ENCODE measurements at regions of chr6 and their contacts with region 1.

Region 1: DNA sequence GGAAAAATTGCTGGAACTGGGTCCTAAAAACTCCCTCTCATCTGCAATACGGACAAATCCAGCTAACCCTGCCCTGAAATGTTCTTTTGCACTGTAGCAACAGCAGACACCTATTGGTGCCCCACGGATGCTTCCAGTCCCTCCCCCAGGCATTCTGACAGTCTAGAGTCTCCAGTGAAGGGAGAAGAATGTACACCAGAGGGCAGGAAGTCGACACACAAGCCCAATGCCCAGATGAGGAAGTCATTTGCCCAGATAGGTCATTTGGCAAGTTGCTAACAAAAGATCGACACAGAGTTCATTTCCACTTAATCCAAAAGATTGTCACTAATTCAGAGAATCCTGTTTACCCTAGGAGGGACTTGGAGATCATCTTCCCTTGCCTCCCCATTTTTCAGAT is 293.0 kb upstream of the PRDM1 start:
- DNase-seq: peak; percentile 72
- H3K4me3 Mint-ChIP-seq: peak overlapping the region; percentile 54
- H3K27ac Mint-ChIP-seq: peak overlapping the region; percentile 76
- H3K4me1 Mint-ChIP-seq: peaks cover 74% of the 10 kb centered on the region
- H3K27me3 Mint-ChIP-seq: no peaks in the 10 kb centered on the region

Region 2: GRCh38 chr6:105484238-105485161 is 308.6 kb before region 1 on chr6:
- intact Hi-C with region 1: loop called (anchors 5 kb)
- DNase-seq: peak; percentile 63
- H3K4me3 Mint-ChIP-seq: no peak overlapping the region
- H3K27ac Mint-ChIP-seq: peak overlapping the region; percentile 26
- H3K4me1 Mint-ChIP-seq: peaks cover 41% of the 10 kb centered on the region
- H3K27me3 Mint-ChIP-seq: peaks cover 6% of the 10 kb centered on the region

Region 3: DNA sequence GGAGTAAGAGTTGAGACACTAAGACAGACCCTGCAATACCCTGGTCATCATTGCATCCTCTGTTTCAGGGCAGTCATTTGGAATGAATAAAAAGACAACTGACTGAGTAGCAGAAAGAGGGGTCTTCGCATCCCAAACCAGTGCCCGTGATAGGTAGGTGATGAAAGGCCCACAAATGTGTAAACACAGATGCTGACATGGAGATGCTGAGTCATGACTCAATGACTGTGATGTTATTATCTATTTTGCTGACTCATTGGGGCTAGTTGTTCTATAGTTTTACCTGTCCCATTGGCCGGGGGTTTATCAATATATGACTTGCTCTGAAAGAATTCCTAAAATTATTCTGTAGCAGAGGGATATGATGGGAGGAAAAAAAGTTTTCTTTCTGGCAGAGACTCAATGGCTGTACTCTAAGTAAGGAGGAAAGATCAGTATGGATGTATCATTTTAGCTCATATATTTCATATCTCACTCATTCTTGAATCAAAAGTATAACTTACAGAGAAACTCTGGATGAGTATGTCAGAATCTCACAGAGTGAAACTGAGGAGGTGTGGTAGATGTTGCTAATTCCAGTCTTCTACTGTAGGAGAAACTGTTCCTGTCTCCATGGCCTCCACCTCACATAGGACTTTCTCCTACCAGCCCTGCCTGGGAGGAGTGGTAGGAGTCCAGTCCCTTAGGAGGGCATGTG is 270.4 kb before region 1 on chr6:
- intact Hi-C with region 1: no loop called
- DNase-seq: no peak
- H3K4me3 Mint-ChIP-seq: no peak overlapping the region
- H3K27ac Mint-ChIP-seq: peak overlapping the region; percentile 5
- H3K4me1 Mint-ChIP-seq: no peaks in the 10 kb centered on the region
- H3K27me3 Mint-ChIP-seq: peaks cover 15% of the 10 kb centered on the region

Region 4: GRCh38 chr6:105748737-105749161 is 44.4 kb before region 1 on chr6:
- intact Hi-C with region 1: loop called (anchors 5 kb)
- DNase-seq: no peak
- H3K4me3 Mint-ChIP-seq: no peak overlapping the region
- H3K27ac Mint-ChIP-seq: peak overlapping the region; percentile 39
- H3K4me1 Mint-ChIP-seq: peaks cover 44% of the 10 kb centered on the region
- H3K27me3 Mint-ChIP-seq: peaks cover 3% of the 10 kb centered on the region

Region 5: GRCh38 chr6:105757512-105758200 is 35.5 kb before region 1 on chr6:
- intact Hi-C with region 1: loop called (anchors 5 kb)
- DNase-seq: peak; percentile 75
- H3K4me3 Mint-ChIP-seq: peak overlapping the region; percentile 46
- H3K27ac Mint-ChIP-seq: peak overlapping the region; percentile 89
- H3K4me1 Mint-ChIP-seq: peaks cover 46% of the 10 kb centered on the region
- H3K27me3 Mint-ChIP-seq: no peaks in the 10 kb centered on the region

Region 6: DNA sequence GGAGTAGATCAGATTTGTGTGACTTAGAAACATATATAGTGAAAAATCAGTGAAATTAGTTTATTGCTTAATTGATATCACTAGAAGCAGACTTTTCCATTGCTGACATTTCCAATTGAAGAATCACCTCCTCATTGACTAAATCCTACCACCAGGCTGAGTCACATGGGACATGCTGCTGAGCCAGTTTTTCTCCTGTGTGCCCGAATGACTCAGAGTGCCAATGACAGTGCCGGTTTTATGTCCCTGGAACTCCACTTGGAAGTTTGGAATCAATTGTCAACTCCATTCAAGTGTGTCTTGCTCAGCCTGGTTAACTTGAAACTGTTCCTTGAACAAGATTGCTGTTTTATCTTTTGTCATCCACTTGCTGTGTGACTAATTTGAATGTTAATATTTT is 23.1 kb before region 1 on chr6:
- intact Hi-C with region 1: no loop called
- DNase-seq: no peak
- H3K4me3 Mint-ChIP-seq: no peak overlapping the region
- H3K27ac Mint-ChIP-seq: no peak overlapping the region
- H3K4me1 Mint-ChIP-seq: peaks cover 3% of the 10 kb centered on the region
- H3K27me3 Mint-ChIP-seq: peaks cover 1% of the 10 kb centered on the region

Region 7: GRCh38 chr6:105810105-105810921 is 17.2 kb after region 1 on chr6:
- intact Hi-C with region 1: loop called (anchors 1 kb)
- DNase-seq: peak; percentile 89
- H3K4me3 Mint-ChIP-seq: peak overlapping the region; percentile 45
- H3K27ac Mint-ChIP-seq: peak overlapping the region; percentile 71
- H3K4me1 Mint-ChIP-seq: peaks cover 67% of the 10 kb centered on the region
- H3K27me3 Mint-ChIP-seq: no peaks in the 10 kb centered on the region

Region 8: GRCh38 chr6:105981002-105981887 is 188.1 kb after region 1 on chr6:
- intact Hi-C with region 1: loop called (anchors 1 kb)
- DNase-seq: peak; percentile 86
- H3K4me3 Mint-ChIP-seq: peak overlapping the region; percentile 78
- H3K27ac Mint-ChIP-seq: peak overlapping the region; percentile 84
- H3K4me1 Mint-ChIP-seq: peaks cover 54% of the 10 kb centered on the region
- H3K27me3 Mint-ChIP-seq: peaks cover 6% of the 10 kb centered on the region

Region 9: GRCh38 chr6:105991561-105992314 is 198.6 kb after region 1 on chr6:
- intact Hi-C with region 1: no loop called
- DNase-seq: no peak
- H3K4me3 Mint-ChIP-seq: peak overlapping the region; percentile 93
- H3K27ac Mint-ChIP-seq: peak overlapping the region; percentile 91
- H3K4me1 Mint-ChIP-seq: peaks cover 52% of the 10 kb centered on the region
- H3K27me3 Mint-ChIP-seq: peaks cover 37% of the 10 kb centered on the region

Region 10: GRCh38 chr6:106085984-106086813 is 293.1 kb after region 1 on chr6 and contains the start of gene PRDM1:
- intact Hi-C with region 1: loop called (anchors 2 kb)
- DNase-seq: peak; percentile 95
- H3K4me3 Mint-ChIP-seq: peak within 1 kb of the TSS; percentile 93
- H3K27ac Mint-ChIP-seq: peak within 1 kb of the TSS; percentile 87
- H3K4me1 Mint-ChIP-seq: peaks cover 72% of the 10 kb centered on the region
- H3K27me3 Mint-ChIP-seq: peaks cover 10% of the 10 kb centered on the region
- total RNA-seq, gene PRDM1: 35.9 and 37.4 TPM in 2 replicates

Region 11: GRCh38 chr6:106244931-106245330 is 451.8 kb after region 1 on chr6:
- intact Hi-C with region 1: no loop called
- DNase-seq: no peak
- H3K4me3 Mint-ChIP-seq: no peak overlapping the region
- H3K27ac Mint-ChIP-seq: no peak overlapping the region
- H3K4me1 Mint-ChIP-seq: peaks cover 11% of the 10 kb centered on the region
- H3K27me3 Mint-ChIP-seq: no peaks in the 10 kb centered on the region

Measured in activated CD4-positive, alpha-beta T cell treated with anti-CD3 and anti-CD28 coated beads, Interleukin-2, amount 10 ng/mL, durations not matched to agents 24 days and 14 days (primary cell).